ENCODE measurements at regions of chr1 and their contacts with region 1.

Region 1: GRCh38 chr1:109802901-109803561 is 39.3 kb upstream of the EPS8L3 start:
- DNase-seq: no peak
- CTCF ChIP-seq: no peak

Region 2: DNA sequence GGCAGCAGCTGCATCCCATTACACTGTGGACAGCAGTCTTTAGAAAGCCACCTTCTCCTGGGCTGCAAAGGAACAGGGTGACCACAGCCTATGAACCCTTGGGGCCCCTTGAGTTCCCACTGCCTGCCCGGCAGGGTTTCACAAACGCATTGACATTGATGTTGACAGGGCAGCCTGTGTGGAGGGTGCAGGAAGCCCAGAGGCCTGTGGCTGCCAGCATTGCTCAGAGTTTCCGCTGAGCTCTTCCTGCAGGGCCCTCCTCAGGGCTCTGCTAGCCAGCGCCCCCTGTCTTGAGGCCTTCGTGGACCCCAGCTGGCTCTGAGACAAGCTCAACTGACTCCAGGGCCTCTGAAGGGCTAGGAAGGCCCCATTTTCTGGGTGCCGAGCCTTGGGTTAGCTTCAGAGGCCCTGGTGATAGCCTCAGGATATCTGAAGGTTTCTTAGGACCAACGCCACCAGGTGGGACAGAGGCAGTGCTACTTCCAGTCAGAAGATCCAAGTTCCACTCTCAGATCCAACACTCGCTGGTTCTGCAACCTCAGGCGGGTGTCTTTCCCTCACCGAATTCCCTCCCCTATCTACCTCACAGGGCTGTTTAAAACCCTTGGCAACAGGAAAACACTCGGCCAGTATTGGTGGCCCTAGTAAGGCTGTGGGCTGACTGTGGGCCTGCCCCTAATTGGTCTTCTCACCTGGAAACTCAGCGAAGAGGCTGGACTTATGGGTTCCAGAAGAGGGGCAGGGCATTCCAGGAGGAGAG is 12.1 kb before region 1 on chr1:
- CTCF ChIA-PET with region 1: interaction called, 18 read pairs
- POLR2A ChIA-PET with region 1: no interaction called
- DNase-seq: peak; percentile 85
- CTCF ChIP-seq: peak; percentile 53

Region 3: DNA sequence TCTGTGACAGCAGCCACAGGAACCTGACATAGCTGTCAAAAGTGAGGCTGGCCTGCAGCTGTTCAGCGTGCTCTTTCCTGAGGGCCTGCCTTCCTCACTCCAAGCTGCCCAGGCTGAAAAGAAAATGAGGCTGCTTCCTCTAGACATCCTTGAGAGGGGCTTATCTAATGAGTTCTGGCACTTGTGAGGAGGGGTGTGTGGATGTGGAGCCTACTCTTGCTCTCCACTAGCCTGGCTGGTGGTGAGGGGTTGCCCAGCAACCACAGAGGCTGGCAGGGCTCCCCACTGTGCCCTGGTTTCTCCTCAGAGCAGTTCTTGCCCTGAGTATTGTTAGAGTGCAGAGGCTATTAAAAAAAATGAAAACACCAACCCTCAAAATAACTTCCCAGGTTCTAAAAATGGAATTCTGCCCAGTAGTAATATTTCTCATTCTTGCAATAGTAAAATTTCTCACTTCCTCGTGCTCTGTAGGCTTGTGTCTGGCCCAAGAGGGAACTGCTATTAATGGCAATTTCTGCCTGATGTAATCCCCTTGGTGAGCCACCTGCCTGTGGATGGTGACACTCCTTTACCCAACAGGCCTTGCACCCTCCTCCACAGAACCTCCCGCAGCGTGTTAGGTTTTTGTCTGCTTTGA is 13.3 kb after region 1 on chr1:
- CTCF ChIA-PET with region 1: interaction called, 15 read pairs
- POLR2A ChIA-PET with region 1: no interaction called
- DNase-seq: peak; percentile 82
- CTCF ChIP-seq: no peak

Region 4: GRCh38 chr1:109917768-109918606 is 115.0 kb after region 1 on chr1:
- CTCF ChIA-PET with region 1: no interaction called
- POLR2A ChIA-PET with region 1: no interaction called
- DNase-seq: no peak
- CTCF ChIP-seq: no peak

Region 5: DNA sequence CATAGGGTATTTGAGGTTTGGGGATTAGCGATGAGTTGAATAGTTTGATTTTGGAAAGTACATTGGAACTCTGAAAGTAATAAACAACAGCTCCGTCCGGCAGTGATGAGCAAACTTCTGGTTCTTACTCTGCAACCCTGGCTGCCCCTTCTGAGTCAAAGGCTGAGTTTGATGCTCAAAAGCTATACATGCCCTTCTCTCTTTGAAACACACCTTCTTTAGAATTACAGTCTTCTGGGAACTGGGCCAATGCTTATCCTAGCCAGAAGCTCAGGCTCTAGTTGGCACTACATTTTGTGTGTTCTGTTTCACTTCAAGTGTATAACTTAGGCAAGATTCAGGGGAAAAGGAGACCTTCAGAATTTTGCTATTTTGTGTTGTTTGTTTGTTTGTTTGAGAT is 190.9 kb after region 1 on chr1:
- CTCF ChIA-PET with region 1: no interaction called
- POLR2A ChIA-PET with region 1: no interaction called
- DNase-seq: no peak
- CTCF ChIP-seq: no peak